ENCODE measurements at regions of chr3 and their contacts with region 1.

Region 1: GRCh38 chr3:189961525-189962161 is 159.1 kb downstream of the P3H2 start:
- DNase-seq: peak; percentile 85
- H3K4me3 ChIP-seq: no peak overlapping the region
- H3K27ac ChIP-seq: peak overlapping the region in 2 of 4 donors; percentile 5 to 9
- H3K4me1 ChIP-seq: peaks cover 0 to 8% (median 2%) of the 10 kb centered on the region in 4 donors
- H3K27me3 ChIP-seq: no peaks in the 10 kb centered on the region
- CTCF ChIP-seq: peak; percentile 85 to 91 (median 88)
- EP300 ChIP-seq: no peak
- POLR2A ChIP-seq: no peak

Region 2: DNA sequence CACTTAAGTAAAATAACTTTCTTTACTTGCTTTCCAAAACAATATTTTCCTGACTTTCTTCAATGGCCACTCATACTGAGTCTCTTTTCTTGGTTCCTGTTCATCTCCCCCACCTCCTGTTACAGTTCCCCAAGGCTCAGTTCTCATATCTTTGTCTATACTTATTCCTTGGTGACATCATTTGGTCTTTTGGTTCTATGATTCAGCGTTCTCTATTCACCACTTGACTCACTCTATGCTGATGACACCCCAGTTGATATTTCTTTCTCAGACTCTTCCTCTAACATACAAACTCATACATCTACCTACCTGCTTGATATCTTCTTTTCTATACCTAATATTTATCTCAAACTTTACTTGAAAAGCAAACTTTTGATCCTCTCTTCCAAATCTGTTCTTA is 244.1 kb after region 1 on chr3:
- intact Hi-C with region 1: loop called (anchors 2 kb)
- DNase-seq: no peak
- H3K4me3 ChIP-seq: no peak overlapping the region
- H3K27ac ChIP-seq: no peak overlapping the region
- H3K4me1 ChIP-seq: no peaks in the 10 kb centered on the region
- H3K27me3 ChIP-seq: no peaks in the 10 kb centered on the region
- CTCF ChIP-seq: no peak
- EP300 ChIP-seq: no peak
- POLR2A ChIP-seq: no peak

Region 3: GRCh38 chr3:190321789-190322603 is 360.4 kb after region 1 on chr3 and contains the start of gene CLDN1:
- intact Hi-C with region 1: loop called (anchors 2 kb)
- DNase-seq: peak; percentile 88
- H3K4me3 ChIP-seq: peak within 1 kb of the TSS; percentile 25 to 55 (median 50)
- H3K27ac ChIP-seq: no peak within 1 kb of the TSS
- H3K4me1 ChIP-seq: peaks cover 0 to 22% (median 16%) of the 10 kb centered on the region in 4 donors
- H3K27me3 ChIP-seq: peaks cover 0 to 14% (median 9%) of the 10 kb centered on the region in 3 donors
- CTCF ChIP-seq: peak; percentile 59 to 99 (median 82)
- EP300 ChIP-seq: no peak
- POLR2A ChIP-seq: no peak
- total RNA-seq, gene CLDN1: 0.27 to 0.49 (median 0.32) TPM

Region 4: DNA sequence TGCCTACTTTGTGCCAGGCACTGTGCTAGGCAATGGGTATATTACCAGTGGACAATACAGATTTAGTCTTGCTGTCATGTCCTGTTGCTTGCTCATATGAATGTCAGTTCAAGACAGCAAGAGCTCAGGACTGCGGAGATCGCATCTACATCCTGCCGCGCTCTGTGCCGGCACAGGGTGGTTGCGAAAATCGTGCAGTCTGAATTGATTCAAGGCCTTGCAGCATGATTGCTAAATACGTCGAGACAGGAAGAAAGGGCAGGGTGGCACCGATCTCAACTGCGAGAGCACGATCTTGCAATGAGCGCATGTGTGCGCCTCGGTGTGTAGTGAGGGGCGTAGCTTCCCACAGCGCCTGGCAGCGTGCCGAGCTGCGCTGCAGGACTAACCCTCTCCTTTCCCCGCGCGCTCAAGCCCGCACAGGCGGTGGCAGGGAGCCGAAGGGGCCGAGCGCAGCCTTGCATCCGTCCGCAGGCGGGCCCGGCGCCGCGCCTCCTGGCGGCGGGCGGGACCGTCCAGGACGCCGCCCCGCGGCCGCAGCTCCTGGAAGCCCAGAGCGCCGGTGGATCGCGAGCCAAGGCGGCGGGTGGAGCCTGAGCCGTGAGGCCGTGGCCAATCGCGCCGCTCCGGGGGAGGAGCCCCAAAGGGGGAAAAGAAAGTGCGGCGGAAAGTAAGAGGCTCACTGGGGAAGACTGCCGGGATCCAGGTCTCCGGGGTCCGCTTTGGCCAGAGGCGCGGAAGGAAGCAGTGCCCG is 551.9 kb after region 1 on chr3 and contains the start of gene IL1RAP:
- intact Hi-C with region 1: loop called (anchors 10 kb)
- DNase-seq: peak; percentile 94
- H3K4me3 ChIP-seq: peak within 1 kb of the TSS; percentile 63 to 87 (median 68)
- H3K27ac ChIP-seq: peak within 1 kb of the TSS; percentile 73 to 80 (median 80)
- H3K4me1 ChIP-seq: peaks cover 0 to 9% (median 3%) of the 10 kb centered on the region in 4 donors
- H3K27me3 ChIP-seq: no peaks in the 10 kb centered on the region
- CTCF ChIP-seq: peak in 1 of 4 experiments; percentile 76
- EP300 ChIP-seq: no peak
- POLR2A ChIP-seq: peak in 1 of 2 donors; percentile 35
- total RNA-seq, gene IL1RAP: 2.9 to 13.0 (median 4.1) TPM

Region 5: DNA sequence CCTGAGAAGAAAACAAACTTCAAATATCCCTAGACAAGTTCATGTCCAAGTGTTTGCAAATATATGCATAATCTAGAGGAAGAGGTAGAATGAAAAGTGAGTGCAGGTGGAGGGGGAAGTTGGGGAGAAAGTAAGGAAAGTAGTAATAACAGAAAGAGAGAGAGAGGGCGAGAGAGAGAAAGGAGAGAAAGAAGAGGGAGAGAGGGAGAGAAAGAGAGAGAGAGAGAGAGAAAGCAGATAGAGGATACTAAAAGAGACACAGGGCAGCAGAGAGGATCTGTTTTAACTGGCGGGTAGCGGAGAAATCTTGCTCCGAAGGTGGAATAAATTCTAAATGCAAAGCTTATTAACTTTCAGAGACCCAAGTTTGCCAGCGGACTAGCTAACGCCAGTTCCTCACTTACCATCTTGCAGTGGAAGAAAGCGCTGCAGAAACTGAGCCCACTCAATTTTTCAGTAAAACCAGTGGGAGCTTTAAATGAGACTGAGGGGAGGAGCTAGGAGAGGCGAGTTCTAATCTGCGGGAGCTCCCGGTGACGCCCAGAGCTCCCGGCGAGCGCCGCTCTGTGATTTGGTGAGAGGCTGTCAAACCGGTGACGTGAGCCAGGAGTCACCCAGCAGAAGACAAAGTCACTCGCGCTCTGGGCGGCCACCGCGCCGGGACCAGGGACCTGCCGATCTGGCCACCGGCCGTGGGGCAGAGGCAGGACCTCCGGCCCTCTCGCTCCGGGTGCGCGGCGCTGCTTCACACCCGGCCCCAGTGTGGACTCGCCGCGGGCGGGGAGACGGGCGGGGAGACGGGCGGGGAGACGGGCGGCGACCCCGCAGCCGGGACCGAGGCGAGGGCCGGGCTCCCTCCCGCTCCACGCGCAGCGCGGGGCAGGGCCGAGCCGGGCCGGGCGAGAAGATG is 900.8 kb after region 1 on chr3 and contains the start of gene GMNC:
- intact Hi-C with region 1: loop called (anchors 5 kb)
- DNase-seq: peak; percentile 89
- H3K4me3 ChIP-seq: peak within 1 kb of the TSS; percentile 49 to 86 (median 77)
- H3K27ac ChIP-seq: peak within 1 kb of the TSS; percentile 75 to 82 (median 80)
- H3K4me1 ChIP-seq: peaks cover 0 to 9% (median 0%) of the 10 kb centered on the region in 4 donors
- H3K27me3 ChIP-seq: no peaks in the 10 kb centered on the region
- CTCF ChIP-seq: no peak
- EP300 ChIP-seq: no peak
- POLR2A ChIP-seq: no peak
- total RNA-seq, gene GMNC: not detected

Measured in sigmoid colon (tissue), 7 donors.